ENCODE measurements at regions of chr20 and their contacts with region 1.

Region 1: GRCh38 chr20:10671221-10671918 is 2.4 kb downstream of the JAG1 start:
- DNase-seq: peak; percentile 92 to 95 (median 94)
- H3K4me3 ChIP-seq: peak overlapping the region in 6 of 7 experiments; percentile 50 to 87 (median 78)
- H3K27ac ChIP-seq: no peak overlapping the region
- H3K4me1 ChIP-seq: peaks cover 0 to 42% (median 37%) of the 10 kb centered on the region in 4 experiments
- H3K27me3 ChIP-seq: peaks cover 0 to 4% (median 0%) of the 10 kb centered on the region in 5 experiments

Region 2: GRCh38 chr20:10659651-10660601 is 11.4 kb before region 1 on chr20:
- CTCF ChIA-PET with region 1: interaction called, 10 read pairs
- POLR2A ChIA-PET with region 1: no interaction called
- DNase-seq: no peak
- H3K4me3 ChIP-seq: no peak overlapping the region
- H3K27ac ChIP-seq: no peak overlapping the region
- H3K4me1 ChIP-seq: peaks cover 0 to 1% (median 0%) of the 10 kb centered on the region in 4 experiments
- H3K27me3 ChIP-seq: no peaks in the 10 kb centered on the region

Region 3: GRCh38 chr20:11204926-11205768 is 533.8 kb after region 1 on chr20:
- CTCF ChIA-PET with region 1: interaction called, 12 read pairs
- POLR2A ChIA-PET with region 1: no interaction called
- DNase-seq: peak; percentile 72 to 83 (median 79)
- H3K4me3 ChIP-seq: no peak overlapping the region
- H3K27ac ChIP-seq: no peak overlapping the region
- H3K4me1 ChIP-seq: peaks cover 0 to 10% (median 0%) of the 10 kb centered on the region in 4 experiments
- H3K27me3 ChIP-seq: no peaks in the 10 kb centered on the region